Activated T-helper 2 cell treated with anti-CD3 and anti-CD28 coated beads, Interferon-gamma antibody, Interleukin-2, Interleukin-4, amounts not matched to agents 10 μg/mL and 5 μg/mL and 100 μg/mL, durations not matched to agents 14 hours and 24 hours and 36 hours (primary cell): ENCODE measurements at regions of chr5 and their contacts with region 1.

Region 1: GRCh38 chr5:98231089-98231488 is 542.4 kb upstream of the RGMB start:
- DNase-seq: no peak
- H3K4me3 Mint-ChIP-seq: no peak overlapping the region
- H3K27ac Mint-ChIP-seq: no peak overlapping the region
- H3K4me1 Mint-ChIP-seq: no peaks in the 10 kb centered on the region
- H3K27me3 Mint-ChIP-seq: no peaks in the 10 kb centered on the region

Region 2: GRCh38 chr5:97118261-97119006 is 1112.7 kb before region 1 on chr5:
- intact Hi-C with region 1: no loop called
- DNase-seq: no peak
- H3K4me3 Mint-ChIP-seq: no peak overlapping the region
- H3K27ac Mint-ChIP-seq: no peak overlapping the region
- H3K4me1 Mint-ChIP-seq: no peaks in the 10 kb centered on the region
- H3K27me3 Mint-ChIP-seq: peaks cover 25% of the 10 kb centered on the region

Region 3: GRCh38 chr5:98309785-98310598 is 78.9 kb after region 1 on chr5:
- intact Hi-C with region 1: loop called (anchors 5 kb)
- DNase-seq: peak; percentile 8
- H3K4me3 Mint-ChIP-seq: no peak overlapping the region
- H3K27ac Mint-ChIP-seq: peak overlapping the region; percentile 15
- H3K4me1 Mint-ChIP-seq: peaks cover 15% of the 10 kb centered on the region
- H3K27me3 Mint-ChIP-seq: peaks cover 2% of the 10 kb centered on the region